ENCODE measurements at regions of chr12 and their contacts with region 1.

Region 1: GRCh38 chr12:98595243-98595988 is 1.9 kb downstream of the SLC25A3 start:
- DNase-seq: no peak
- H3K4me3 ChIP-seq: peak overlapping the region; percentile 100
- H3K27ac ChIP-seq: peak overlapping the region; percentile 98
- H3K4me1 ChIP-seq: peaks cover 66% of the 10 kb centered on the region
- H3K27me3 ChIP-seq: no peaks in the 10 kb centered on the region
- CTCF ChIP-seq: no peak

Region 2: GRCh38 chr12:98126637-98127335 is 468.6 kb before region 1 on chr12:
- intact Hi-C with region 1: no loop called
- DNase-seq: no peak
- H3K4me3 ChIP-seq: no peak overlapping the region
- H3K27ac ChIP-seq: peak overlapping the region; percentile 56
- H3K4me1 ChIP-seq: peaks cover 28% of the 10 kb centered on the region
- H3K27me3 ChIP-seq: no peaks in the 10 kb centered on the region
- CTCF ChIP-seq: no peak

Region 3: DNA sequence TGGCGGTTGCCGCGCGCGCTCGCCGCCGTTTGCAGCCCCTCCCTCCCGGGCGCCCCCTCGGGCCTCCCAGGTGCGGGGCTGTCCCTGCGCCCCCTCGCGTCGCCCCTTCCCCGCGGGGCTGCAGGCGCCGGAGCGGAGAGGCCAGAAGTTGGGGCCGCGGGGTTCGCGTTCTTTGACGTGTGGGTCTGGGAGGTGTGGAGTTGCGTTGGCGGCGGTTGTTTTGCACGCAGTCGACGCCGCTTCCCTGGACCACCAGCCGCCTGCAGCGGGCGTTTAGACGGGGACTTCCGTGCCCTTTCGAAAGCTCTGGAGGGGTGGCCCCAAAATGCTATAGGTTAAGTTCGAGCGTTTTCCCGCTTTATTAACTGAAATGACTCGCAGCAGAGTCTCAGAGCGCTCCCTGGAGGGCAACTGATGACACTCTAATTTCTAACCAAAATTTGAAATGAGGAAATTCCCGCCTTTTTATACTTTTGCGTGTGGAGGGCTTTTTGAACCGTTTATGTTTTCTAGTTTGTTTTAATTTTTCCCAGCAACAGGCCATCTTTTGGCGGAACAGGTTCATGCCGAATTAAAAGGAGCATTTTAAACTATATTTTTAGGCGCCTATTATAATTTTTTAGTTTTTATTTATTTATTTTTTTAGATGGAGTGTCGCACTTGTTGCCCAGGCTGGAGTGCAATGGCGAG is 79.1 kb before region 1 on chr12:
- intact Hi-C with region 1: no loop called
- DNase-seq: peak; percentile 70
- H3K4me3 ChIP-seq: peak overlapping the region; percentile 98
- H3K27ac ChIP-seq: peak overlapping the region; percentile 96
- H3K4me1 ChIP-seq: peaks cover 52% of the 10 kb centered on the region
- H3K27me3 ChIP-seq: no peaks in the 10 kb centered on the region
- CTCF ChIP-seq: peak; percentile 79

Region 4: GRCh38 chr12:98644711-98645402 is 49.4 kb after region 1 on chr12 and contains the starts of genes APAF1 and IKBIP:
- intact Hi-C with region 1: loop called (anchors 5 kb)
- DNase-seq: peak; percentile 99
- H3K4me3 ChIP-seq: peak within 1 kb of the TSS; percentile 91
- H3K27ac ChIP-seq: peak within 1 kb of the TSS; percentile 90
- H3K4me1 ChIP-seq: peaks cover 42% of the 10 kb centered on the region
- H3K27me3 ChIP-seq: no peaks in the 10 kb centered on the region
- CTCF ChIP-seq: no peak
- total RNA-seq, gene APAF1: 5.0 TPM
- total RNA-seq, gene IKBIP: 4.4 TPM